ENCODE measurements at regions of chr14 and their contacts with region 1.

Region 1: GRCh38 chr14:99628832-99629618 is 15.9 kb upstream of the HHIPL1 start:
- DNase-seq: peak; percentile 75
- ATAC-seq: peak; percentile 92
- H3K4me3 Mint-ChIP-seq: no peak overlapping the region
- H3K27ac Mint-ChIP-seq: no peak overlapping the region
- H3K4me1 Mint-ChIP-seq: peaks cover 4% of the 10 kb centered on the region
- H3K27me3 Mint-ChIP-seq: peaks cover 7% of the 10 kb centered on the region

Region 2: DNA sequence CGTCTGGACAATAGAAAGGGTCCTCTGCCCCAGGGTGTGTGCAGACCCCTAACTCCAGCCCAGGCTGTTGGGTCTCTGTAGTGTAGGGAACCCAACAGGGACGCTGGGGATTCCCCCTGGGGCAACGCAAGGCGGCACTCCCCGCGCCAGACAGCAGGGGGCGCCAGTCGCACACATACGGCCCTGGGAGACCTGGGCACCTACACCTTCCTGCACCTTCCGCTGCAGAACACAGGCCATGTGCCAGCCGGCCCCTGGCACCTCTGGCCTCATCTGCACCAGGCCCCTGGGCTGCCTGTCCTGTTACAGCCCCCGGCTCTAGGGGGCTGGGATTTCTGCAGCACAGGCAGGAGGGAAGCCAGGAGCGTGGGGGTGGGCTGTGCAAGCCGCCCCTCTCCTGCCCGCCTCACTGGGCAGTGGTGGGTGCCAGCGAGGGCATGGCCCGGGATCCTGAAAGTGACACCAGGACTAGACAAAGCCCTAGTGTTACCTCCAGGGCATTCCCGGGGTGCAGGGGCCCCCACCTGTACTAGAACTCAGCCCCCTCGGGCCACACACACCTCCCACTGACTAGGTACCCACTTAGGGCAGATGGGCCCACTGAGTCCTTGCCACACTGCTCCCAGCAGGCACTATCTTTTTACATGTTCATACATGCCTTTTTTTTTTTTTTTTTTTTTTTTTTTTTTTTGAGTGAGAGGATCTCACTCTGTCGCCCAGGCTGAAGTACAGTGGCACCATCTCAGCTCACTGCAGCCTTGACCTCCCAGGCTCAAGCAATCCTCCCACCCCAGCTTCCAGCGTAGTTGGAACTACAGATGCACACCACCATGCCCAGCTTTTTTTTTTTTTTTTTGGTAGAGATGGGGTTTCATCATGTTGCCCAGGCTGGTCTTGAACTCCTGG is 110.3 kb before region 1 on chr14:
- CTCF ChIA-PET with region 1: interaction called, 13 read pairs
- DNase-seq: peak; percentile 85
- ATAC-seq: peak; percentile 83
- H3K4me3 Mint-ChIP-seq: no peak overlapping the region
- H3K27ac Mint-ChIP-seq: no peak overlapping the region
- H3K4me1 Mint-ChIP-seq: no peaks in the 10 kb centered on the region
- H3K27me3 Mint-ChIP-seq: no peaks in the 10 kb centered on the region

Region 3: GRCh38 chr14:99524804-99525698 is 104.0 kb before region 1 on chr14:
- CTCF ChIA-PET with region 1: interaction called, 10 read pairs
- DNase-seq: no peak
- ATAC-seq: peak; percentile 65
- H3K4me3 Mint-ChIP-seq: no peak overlapping the region
- H3K27ac Mint-ChIP-seq: peak overlapping the region; percentile 77
- H3K4me1 Mint-ChIP-seq: peaks cover 4% of the 10 kb centered on the region
- H3K27me3 Mint-ChIP-seq: no peaks in the 10 kb centered on the region